ENCODE measurements at regions of chr2 and their contacts with region 1.

Region 1: GRCh38 chr2:207625018-207625907 is at the start of gene METTL21A:
- DNase-seq: peak; percentile 95
- ATAC-seq: peak; percentile 85
- H3K4me3 Mint-ChIP-seq: peak within 1 kb of the TSS; percentile 96
- H3K27ac Mint-ChIP-seq: peak within 1 kb of the TSS; percentile 97
- H3K4me1 Mint-ChIP-seq: peaks cover 42% of the 10 kb centered on the region
- H3K27me3 Mint-ChIP-seq: no peaks in the 10 kb centered on the region
- CTCF ChIP-seq: no peak
- total RNA-seq, gene METTL21A: 28.9 to 30.7 TPM

Region 2: DNA sequence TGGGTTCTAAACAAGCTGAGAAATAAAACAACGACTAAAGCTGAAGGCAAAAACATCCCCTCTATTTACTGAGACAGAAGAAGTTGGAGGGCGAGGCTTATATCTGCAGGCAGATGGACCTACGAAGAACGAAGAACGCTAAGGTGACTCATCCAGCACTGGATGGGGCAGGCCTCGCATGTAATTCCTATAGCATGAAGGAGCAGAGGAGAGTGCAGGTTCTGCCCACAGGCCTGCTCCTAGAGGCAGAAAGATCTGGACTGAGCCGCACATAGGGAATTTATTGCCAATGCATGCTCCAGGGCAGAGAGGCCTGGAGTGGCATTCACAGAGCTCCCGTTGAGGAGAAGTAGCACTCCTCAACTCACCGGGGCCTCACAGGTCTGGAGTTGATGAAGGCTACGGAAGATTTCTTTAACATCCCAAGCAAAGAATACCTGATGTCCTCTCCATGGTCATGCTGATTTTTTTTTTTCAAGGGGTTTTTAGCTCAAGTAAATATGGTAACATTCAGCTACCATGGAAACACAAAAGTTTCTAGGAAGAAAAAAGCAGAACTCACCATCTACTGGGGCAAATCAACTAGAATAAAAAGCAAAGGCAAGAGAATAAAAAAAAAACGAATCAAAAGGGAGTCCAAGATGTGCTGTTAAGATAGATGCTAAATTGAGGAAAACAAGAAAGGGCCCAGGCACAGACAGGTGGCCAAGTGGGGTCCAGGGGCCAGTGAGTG is 10.4 kb after region 1 on chr2:
- CTCF ChIA-PET with region 1: interaction called, 15 read pairs
- POLR2A ChIA-PET with region 1: interaction called, 3 read pairs
- intact Hi-C with region 1: no loop called
- DNase-seq: no peak
- ATAC-seq: no peak
- H3K4me3 Mint-ChIP-seq: no peak overlapping the region
- H3K27ac Mint-ChIP-seq: no peak overlapping the region
- H3K4me1 Mint-ChIP-seq: peaks cover 10% of the 10 kb centered on the region
- H3K27me3 Mint-ChIP-seq: peaks cover 1% of the 10 kb centered on the region
- CTCF ChIP-seq: no peak

Region 3: DNA sequence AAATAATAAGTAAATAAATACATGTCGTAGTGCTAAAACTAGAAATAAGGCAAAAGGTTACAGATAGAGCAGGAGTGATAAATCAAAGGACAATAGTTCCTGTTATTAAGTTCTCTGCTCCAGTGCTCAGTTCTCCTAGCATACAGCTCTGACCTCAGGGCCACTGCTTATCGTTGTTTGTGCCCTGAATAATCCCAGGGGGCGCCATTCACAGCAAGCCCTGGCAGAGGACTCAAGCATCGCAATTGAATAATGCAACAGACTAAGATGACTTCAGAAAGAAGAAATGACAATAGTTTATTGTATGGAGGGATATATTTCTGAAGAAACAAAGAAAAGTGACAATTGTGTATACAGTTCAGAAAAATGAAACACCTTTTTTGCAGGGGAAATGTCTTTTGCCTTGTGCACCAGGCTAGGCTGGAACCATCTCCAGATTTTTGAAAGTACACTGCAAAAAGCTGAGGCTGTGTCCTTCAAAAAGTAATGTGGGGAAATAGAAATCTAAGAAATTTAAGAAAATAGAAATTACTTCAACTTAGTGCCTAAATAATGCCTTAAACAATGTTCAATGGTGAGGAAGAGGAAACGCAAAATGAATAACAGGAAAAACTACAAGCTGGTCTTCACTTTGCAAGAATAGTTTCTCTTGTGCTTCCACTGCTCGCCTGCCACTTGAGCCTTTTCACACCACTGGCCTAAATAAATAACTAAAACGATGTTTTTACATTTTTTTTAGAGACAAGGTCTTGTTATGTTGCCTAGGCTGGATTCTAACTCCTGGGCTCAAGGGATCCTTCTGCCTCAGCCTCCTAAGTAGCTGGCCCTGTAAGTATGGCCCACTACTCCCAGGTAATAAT is 67.2 kb after region 1 on chr2:
- CTCF ChIA-PET with region 1: interaction called, 4 read pairs
- POLR2A ChIA-PET with region 1: interaction called, 3 read pairs
- intact Hi-C with region 1: loop called (anchors 2 kb)
- DNase-seq: peak; percentile 58
- ATAC-seq: peak; percentile 42
- H3K4me3 Mint-ChIP-seq: no peak overlapping the region
- H3K27ac Mint-ChIP-seq: no peak overlapping the region
- H3K4me1 Mint-ChIP-seq: peaks cover 9% of the 10 kb centered on the region
- H3K27me3 Mint-ChIP-seq: no peaks in the 10 kb centered on the region
- CTCF ChIP-seq: peak; percentile 65

Region 4: GRCh38 chr2:207710814-207711740 is 85.8 kb after region 1 on chr2 and contains the start of gene CCNYL1:
- CTCF ChIA-PET with region 1: interaction called, 19 read pairs
- POLR2A ChIA-PET with region 1: interaction called, 8 read pairs
- intact Hi-C with region 1: loop called (anchors 5 kb)
- DNase-seq: peak; percentile 98
- ATAC-seq: peak; percentile 99
- H3K4me3 Mint-ChIP-seq: peak within 1 kb of the TSS; percentile 96
- H3K27ac Mint-ChIP-seq: peak within 1 kb of the TSS; percentile 77
- H3K4me1 Mint-ChIP-seq: peaks cover 31% of the 10 kb centered on the region
- H3K27me3 Mint-ChIP-seq: no peaks in the 10 kb centered on the region
- CTCF ChIP-seq: no peak
- total RNA-seq, gene CCNYL1: 3.8 to 4.3 TPM

Region 5: DNA sequence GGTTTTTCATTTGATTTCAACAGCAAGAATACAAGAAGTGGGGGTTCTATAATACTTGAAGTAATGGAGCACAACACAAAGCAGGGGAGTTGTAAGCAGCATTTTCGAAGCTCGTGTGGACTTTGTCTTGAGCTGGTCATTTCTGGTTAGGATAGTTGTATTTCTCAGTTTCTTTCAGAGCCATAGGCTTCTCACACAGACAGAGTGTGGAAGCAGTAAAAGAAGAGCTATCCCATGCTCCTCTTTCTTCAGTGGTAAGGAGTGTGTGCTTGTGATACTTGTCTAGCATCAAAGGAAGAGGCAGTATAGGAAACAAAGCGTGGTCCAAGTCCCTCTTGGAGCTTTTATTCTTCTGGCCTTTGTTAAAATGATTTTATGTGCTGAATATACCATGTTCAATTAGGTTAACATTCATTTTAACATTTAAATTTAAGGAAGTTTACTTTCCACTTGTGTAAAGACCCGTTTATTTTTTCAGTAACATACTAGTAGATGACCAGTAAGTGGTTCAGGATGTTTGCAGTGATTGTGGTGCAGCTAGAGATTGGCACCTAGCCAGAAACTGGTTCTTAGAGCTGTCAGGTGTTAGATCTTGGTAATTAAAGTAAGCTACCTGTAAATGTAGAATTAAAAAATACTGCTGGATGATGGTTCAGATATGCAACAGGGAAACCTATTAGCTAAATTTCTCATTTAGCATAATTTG is 100.8 kb after region 1 on chr2:
- CTCF ChIA-PET with region 1: interaction called, 10 read pairs
- POLR2A ChIA-PET with region 1: interaction called, 3 read pairs
- intact Hi-C with region 1: no loop called
- DNase-seq: no peak
- ATAC-seq: no peak
- H3K4me3 Mint-ChIP-seq: no peak overlapping the region
- H3K27ac Mint-ChIP-seq: no peak overlapping the region
- H3K4me1 Mint-ChIP-seq: peaks cover 43% of the 10 kb centered on the region
- H3K27me3 Mint-ChIP-seq: no peaks in the 10 kb centered on the region
- CTCF ChIP-seq: no peak

Region 6: DNA sequence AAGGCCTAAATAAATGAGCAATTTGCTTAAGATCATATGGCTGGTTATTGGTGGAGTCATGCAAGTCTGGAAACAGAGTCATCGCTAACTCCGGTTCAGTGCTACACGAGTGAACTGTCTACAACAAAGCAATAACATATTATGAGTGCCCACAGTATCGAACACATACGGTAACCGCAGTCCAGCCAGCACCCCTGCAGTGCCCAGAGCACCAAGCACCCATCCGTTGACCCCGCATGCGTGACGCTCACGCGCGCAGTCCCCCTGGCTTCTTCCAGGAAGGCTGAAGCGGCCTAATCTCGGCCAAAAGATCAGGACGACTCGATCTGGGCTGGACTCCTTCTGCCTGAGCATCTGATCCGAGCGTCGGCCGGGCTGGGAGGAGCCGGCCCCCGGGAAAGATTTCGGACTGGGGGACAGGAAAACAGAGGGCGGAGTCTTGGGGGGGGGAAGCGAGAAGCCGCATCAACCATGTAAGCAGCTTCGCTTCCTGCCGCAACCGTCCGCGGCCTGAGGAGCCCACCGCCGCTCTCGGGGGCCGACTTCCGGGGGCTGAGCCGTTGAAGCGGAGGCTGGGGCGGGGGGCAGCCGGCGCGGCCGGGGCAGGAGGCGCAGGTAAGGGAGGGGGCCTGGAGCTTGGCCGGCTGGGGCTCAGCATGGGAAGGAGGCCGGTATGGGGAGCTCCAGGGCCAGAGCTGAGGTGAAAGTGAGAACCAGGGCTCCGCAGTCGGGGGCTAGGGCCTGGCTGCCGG is 640.7 kb after region 1 on chr2 and contains the start of gene PIKFYVE:
- CTCF ChIA-PET with region 1: no interaction called
- POLR2A ChIA-PET with region 1: no interaction called
- intact Hi-C with region 1: loop called (anchors 10 kb)
- DNase-seq: peak; percentile 95
- ATAC-seq: peak; percentile 91
- H3K4me3 Mint-ChIP-seq: peak within 1 kb of the TSS; percentile 87
- H3K27ac Mint-ChIP-seq: peak within 1 kb of the TSS; percentile 95
- H3K4me1 Mint-ChIP-seq: peaks cover 27% of the 10 kb centered on the region
- H3K27me3 Mint-ChIP-seq: no peaks in the 10 kb centered on the region
- CTCF ChIP-seq: no peak
- total RNA-seq, gene PIKFYVE: 16.4 to 16.9 TPM

Measured in activated CD8-positive, alpha-beta T cell treated with anti-CD3 and anti-CD28 coated beads for 36 hours (primary cell).